ENCODE measurements at regions of chr10 and their contacts with region 1.

Region 1: DNA sequence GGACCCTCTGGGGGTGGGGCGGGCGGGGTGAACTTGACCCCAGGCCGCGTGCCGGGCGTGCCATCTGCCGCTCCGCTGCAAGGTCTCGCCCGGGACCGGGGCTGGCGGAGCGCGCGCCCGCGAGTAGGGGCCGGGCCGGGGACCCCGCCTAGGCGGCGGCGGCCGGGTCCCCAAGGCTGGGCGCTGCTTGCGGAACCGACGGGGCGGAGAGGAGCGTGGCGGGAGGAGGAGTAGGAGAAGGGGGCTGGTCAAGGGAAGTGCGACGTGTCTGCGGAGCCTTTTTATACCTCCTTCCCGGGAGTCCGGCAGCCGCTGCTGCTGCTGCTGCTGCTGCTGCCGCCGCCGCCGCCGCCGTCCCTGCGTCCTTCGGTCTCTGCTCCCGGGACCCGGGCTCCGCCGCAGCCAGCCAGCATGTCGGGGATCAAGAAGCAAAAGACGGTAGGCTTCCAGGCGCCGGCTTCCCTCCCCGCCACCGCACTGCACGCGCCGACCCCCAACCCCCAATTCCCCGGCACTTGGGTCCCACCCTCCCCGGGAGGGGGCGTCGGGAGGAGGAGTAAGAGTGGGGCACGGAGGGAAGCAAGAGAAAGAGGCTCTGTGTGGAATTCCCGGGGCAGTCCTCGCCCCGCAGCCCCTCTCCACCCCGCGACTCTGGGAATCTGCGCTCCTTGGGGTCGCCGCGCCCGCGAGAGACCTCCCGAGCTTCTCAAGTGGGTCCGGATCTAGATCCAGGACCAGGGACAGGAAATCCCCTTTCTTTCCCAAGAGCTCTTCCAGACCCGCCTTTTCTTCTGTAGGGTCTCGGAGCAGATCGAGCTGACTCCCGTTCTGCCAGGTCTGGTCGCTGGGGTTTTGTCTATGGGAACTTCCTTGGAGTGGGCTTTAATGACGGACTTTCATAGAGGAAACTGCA is at the start of gene PAPSS2:
- DNase-seq: peak; percentile 68
- H3K4me3 Mint-ChIP-seq: peak within 1 kb of the TSS; percentile 76
- H3K27ac Mint-ChIP-seq: no peak within 1 kb of the TSS
- H3K4me1 Mint-ChIP-seq: peaks cover 8% of the 10 kb centered on the region
- H3K27me3 Mint-ChIP-seq: peaks cover 45% of the 10 kb centered on the region
- total RNA-seq, gene PAPSS2: 0.07 TPM in 1 of 2 replicates, not detected in the other

Region 2: GRCh38 chr10:87531908-87532622 is 127.8 kb before region 1 on chr10:
- intact Hi-C with region 1: loop called (anchors 10 kb)
- DNase-seq: no peak
- H3K4me3 Mint-ChIP-seq: no peak overlapping the region
- H3K27ac Mint-ChIP-seq: no peak overlapping the region
- H3K4me1 Mint-ChIP-seq: peaks cover under 1% of the 10 kb centered on the region
- H3K27me3 Mint-ChIP-seq: no peaks in the 10 kb centered on the region

Region 3: DNA sequence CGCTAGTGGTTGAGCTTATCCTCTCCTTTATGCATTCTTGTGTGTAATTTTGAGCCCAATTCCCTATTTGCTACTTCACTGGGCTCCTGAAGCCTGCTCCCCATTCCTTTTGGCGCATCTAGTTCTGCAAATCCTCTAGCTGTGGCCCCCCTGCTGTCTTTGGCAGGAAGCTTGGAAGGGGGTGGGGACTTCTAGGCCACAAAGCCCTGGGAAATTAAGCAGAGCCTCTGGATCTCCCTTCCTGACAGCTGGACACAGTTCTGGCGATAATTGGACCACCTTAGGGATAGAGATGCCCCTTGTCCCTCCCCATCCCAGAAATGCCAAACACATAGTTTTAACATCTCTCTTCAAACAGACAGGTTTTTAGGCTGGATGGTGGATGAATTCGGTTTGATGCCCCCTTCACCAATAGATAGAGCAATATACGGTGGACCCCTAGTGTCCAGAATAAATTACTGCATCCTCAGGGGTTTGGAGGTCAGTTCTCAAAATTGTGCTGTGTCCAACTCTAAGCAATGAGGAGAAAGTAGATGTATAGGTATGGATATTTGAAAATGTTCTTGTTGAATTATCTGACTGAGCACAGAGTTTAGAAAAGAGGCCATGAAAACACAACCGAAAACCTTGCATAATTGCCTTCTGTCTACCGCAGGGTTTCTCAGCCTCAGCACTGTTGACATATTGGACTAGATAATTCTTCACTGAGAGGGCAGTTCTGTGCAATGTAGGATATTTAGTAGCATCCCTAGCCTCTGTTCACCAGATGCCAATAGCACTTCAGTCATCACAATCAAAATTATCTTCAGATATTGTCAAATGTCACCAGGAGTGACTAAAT is 75.4 kb after region 1 on chr10:
- intact Hi-C with region 1: loop called (anchors 2 kb)
- DNase-seq: peak; percentile 59
- H3K4me3 Mint-ChIP-seq: no peak overlapping the region
- H3K27ac Mint-ChIP-seq: no peak overlapping the region
- H3K4me1 Mint-ChIP-seq: no peaks in the 10 kb centered on the region
- H3K27me3 Mint-ChIP-seq: peaks cover 29% of the 10 kb centered on the region

Region 4: DNA sequence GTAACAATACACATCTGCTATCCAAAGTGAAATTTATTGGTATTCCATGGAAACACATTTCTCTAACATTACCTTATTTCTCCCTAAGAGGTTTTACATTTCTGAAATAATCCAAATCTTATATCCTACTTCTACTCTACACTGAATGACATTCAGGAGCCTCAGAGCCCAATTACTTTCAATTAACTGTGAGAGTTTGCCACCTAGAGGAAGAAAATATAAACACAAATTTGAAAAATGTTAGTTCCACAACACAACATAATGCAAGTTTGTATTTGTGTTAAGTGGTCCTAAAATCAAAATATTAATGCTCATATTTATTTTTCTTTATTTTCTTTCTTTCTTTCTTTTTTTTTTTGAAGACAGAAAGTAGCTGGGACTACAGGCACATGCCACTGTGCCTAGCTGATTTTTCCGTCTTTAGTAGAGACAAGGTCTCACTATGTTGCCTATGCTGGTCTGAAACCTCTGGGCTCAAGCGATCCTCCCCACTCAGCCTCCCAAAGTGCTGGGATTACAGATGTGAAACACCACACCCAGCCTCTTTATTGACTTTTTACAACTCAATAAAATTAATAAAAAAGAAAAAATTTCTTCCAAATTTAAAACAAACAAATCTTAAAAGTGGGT is 112.2 kb after region 1 on chr10:
- intact Hi-C with region 1: loop called (anchors 1 kb)
- DNase-seq: no peak
- H3K4me3 Mint-ChIP-seq: no peak overlapping the region
- H3K27ac Mint-ChIP-seq: no peak overlapping the region
- H3K4me1 Mint-ChIP-seq: peaks cover 8% of the 10 kb centered on the region
- H3K27me3 Mint-ChIP-seq: no peaks in the 10 kb centered on the region

Region 5: GRCh38 chr10:88553116-88553752 is 893.4 kb after region 1 on chr10:
- intact Hi-C with region 1: loop called (anchors 5 kb)
- DNase-seq: peak; percentile 83
- H3K4me3 Mint-ChIP-seq: no peak overlapping the region
- H3K27ac Mint-ChIP-seq: no peak overlapping the region
- H3K4me1 Mint-ChIP-seq: peaks cover 3% of the 10 kb centered on the region
- H3K27me3 Mint-ChIP-seq: peaks cover 9% of the 10 kb centered on the region

Measured in activated CD4-positive, alpha-beta T cell treated with anti-CD3 and anti-CD28 coated beads, Interleukin-2, amount 10 ng/mL, durations not matched to agents 24 days and 14 days (primary cell).